ENCODE measurements at regions of chr14 and their contacts with region 1.

Region 1: GRCh38 chr14:32576088-32576795 is 247.1 kb downstream of the AKAP6 start:
- DNase-seq: no peak
- ATAC-seq: peak; percentile 80

Region 2: DNA sequence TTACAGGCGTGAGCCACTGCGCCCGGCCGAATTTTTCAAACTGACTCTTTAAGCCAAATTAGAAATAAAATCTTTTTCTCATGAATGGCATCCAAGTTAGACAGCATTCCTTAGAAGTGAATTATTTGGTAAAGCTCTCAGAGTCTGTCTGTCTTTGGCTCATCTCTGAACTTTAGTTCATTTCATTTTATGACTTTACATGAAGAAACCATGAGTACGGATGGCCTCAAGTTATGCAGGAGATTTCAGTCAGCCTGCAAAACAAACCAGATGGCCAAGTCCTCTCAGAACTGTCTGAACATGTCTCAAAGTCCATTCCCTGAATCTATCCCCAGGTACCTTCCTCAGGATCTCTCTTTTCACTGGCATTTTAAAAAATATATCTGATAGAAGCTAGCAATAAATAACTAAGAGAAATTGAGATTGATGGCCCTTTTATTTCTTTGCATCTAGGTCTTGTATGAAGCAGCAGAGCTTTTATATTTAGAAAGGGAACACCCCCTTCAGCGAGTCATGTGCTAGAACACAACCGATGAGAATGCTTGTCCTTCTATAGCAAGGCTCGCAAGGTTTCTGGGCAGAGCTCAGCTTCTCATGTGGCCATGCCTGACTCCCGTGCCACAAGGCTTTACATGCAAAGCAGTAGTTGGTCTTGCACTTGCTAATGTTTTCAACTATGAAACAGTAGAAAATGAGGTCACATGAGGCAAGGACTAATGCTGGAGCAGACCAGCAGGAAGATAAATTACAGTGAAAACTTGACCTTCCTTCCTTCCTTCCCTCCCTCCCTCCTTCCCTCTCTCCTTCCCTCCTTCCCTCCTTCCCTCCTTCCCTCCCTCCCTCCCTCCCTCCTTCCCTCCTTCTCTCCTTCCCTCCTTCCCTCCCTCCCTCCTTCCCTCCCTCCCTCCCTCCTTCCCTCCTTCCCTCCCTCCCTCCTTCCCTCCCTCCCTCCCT is 122.1 kb before region 1 on chr14:
- intact Hi-C with region 1: no loop called
- DNase-seq: no peak
- ATAC-seq: peak; percentile 33

Region 3: GRCh38 chr14:32826404-32827082 is 250.3 kb after region 1 on chr14:
- intact Hi-C with region 1: loop called (anchors 10 kb)
- DNase-seq: no peak
- ATAC-seq: peak; percentile 75

Region 4: GRCh38 chr14:32998433-32998832 is 422.2 kb after region 1 on chr14:
- intact Hi-C with region 1: loop called (anchors 10 kb)
- DNase-seq: no peak
- ATAC-seq: peak; percentile 36

Region 5: DNA sequence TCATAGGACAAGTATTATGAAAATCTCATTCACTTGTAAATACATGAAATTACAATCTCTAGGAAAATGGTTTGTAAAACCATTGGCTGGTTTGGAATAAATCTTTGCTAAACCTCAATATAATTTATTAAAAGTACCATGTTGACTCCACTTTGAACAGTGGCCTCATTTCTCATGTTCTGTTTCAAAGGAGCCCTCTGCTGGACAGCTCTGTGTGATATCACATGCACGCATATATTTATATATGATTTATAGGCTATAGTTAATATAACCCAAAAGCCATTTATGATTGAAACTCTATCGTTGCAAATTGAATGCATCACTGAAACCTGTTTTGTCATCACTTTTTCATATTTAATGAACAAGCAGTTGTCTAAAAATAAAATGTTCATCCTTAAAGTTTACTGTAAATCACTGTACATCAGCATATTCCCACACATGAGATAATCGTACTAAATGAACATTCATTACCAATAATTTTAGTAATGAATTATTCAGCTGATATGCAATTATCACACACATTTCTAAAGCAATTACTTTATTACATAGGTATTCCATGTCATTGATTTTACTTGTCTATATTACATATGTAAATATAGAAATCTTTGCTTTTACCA is 856.3 kb after region 1 on chr14:
- intact Hi-C with region 1: loop called (anchors 10 kb)
- DNase-seq: no peak
- ATAC-seq: no peak

Region 6: DNA sequence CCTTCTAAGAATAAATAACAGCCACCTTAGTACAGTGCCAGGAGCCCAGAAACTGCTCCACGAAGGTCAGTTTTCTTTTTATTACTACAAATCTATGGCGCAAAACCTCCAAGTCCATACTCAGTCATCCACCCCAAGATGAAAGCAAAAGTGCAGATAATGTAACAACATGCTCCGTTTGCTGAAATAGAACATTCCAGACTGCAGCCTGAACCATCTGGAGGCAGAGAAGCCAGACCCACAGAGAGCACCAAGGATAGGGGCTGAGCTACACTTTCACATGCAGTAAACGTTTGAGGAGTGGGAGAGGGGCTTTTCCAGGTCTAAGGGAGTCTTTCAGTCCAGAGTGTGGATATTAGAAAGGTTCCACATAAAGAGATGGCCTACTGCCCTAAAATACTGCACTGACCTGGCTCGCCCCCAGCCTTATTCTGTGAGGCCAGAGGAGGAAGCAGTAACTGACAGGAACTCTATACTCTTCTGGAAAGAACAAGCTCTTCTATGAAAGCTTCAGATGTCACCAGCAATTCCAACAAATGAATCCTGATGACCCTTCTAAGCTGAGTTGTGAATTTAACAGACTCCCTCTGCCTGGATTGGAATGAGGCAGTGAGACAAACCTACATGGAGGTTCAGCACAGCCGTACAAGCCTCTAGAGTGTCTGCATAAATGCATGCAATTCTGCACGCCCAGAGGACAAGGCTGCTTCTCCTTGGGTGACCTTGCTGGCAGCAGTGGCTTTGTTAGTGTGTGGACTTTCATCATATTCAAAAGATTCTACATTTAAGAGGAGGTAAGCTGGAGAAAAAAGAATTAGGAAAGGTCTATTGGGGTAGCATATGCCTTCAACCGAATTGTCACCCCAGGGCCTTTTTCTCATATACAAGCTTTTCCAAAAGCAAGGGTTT is 1528.5 kb after region 1 on chr14:
- intact Hi-C with region 1: loop called (anchors 5 kb)
- DNase-seq: no peak
- ATAC-seq: peak; percentile 79